Spleen (tissue), 13 donors: ENCODE measurements at regions of chr14 and their contacts with region 1.

Region 1: DNA sequence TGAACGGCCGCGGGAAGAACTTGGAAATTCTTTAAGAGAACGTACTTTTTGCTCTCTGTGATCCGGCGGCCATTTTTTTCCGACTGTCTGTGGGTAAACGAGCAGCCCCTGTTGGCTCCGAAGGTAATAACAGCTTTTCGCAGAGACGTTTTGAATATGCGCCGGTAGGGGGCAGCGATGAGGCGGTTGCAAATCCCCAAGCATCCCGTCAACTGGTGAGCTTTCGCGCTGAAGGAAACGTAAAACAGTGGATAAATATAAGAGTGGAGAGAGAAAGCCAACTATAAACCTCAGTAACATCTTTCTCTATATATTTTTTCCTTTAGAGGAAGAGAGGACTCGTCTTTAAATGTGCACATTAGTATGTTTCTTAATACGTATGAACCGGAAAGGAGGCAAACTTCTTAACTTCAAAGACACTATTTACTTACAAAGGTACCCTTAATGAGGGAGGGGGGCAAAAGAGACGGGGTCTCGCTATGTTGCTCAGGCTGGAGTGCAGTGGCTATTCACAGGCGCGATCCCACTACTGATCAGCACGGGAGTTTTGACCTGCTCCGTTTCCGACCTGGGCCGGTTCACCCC is 9.6 kb upstream of the NEMF start:
- DNase-seq: peak; percentile 94
- H3K4me3 ChIP-seq: peak overlapping the region; percentile 36 to 75 (median 50)
- H3K27ac ChIP-seq: peak overlapping the region; percentile 95 to 99 (median 98)
- H3K4me1 ChIP-seq: peaks cover 15 to 60% (median 42%) of the 10 kb centered on the region in 6 donors
- H3K27me3 ChIP-seq: no peaks in the 10 kb centered on the region
- CTCF ChIP-seq: peak; percentile 99 to 100 (median 100)
- POLR2A ChIP-seq: no peak

Region 2: DNA sequence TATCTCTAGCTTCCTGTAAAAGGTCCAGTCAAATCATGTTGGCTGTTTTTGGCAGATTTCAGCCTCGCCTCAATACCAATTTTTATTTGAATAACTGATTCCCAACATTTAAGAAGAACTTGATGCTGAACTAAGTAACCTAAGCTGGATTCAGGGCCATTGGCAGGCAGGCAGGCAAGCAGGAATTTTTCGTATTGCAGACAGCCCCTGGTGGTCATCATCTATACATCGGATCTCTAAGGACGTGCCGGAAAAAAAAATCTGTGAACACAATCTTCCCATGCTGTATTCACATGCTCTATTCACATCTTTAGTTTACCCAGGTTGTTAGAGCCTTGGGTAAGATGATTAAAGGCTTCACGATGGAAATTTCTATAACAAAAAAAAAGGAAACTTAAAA is 247.2 kb after region 1 on chr14:
- intact Hi-C with region 1: loop called (anchors 5 kb)
- DNase-seq: no peak
- H3K4me3 ChIP-seq: no peak overlapping the region
- H3K27ac ChIP-seq: no peak overlapping the region
- H3K4me1 ChIP-seq: peaks cover 7 to 44% (median 17%) of the 10 kb centered on the region in 6 donors
- H3K27me3 ChIP-seq: no peaks in the 10 kb centered on the region
- CTCF ChIP-seq: no peak
- POLR2A ChIP-seq: no peak